ENCODE measurements at regions of chr3 and their contacts with region 1.

Region 1: DNA sequence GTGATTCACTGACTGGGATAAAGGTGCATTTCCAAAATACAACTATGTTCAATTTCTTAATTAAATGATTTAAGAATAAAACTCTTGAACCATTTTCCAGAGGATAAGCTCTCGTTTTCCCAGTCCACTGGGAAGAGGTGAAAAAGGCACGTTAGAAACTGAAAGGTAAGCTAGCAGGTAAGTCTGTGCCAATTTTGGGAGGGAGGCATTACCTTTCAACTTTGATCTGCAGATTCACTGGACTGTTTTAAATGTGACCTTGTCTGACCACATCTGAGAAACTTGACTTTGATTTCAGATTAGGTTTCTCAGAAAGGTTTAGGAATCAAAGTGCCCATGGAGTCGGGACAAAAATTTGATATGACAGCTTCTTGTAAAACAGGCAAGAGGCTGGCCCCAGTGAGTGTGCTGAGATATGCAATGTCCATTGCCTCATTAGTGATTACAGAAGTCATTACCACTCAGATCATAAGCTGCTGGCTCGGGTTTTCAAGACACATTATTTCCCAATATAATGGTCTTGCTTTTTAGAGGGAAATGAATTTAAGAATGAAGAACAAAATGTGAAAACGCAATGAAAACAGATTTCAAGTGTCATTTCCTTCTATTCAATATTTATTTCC is 118.8 kb downstream of the ADAMTS9 start:
- DNase-seq: no peak
- H3K4me3 ChIP-seq: no peak overlapping the region
- H3K27ac ChIP-seq: no peak overlapping the region
- H3K4me1 ChIP-seq: no peaks in the 10 kb centered on the region
- H3K27me3 ChIP-seq: no peaks in the 10 kb centered on the region
- CTCF ChIP-seq: no peak
- POLR2A ChIP-seq: no peak

Region 2: DNA sequence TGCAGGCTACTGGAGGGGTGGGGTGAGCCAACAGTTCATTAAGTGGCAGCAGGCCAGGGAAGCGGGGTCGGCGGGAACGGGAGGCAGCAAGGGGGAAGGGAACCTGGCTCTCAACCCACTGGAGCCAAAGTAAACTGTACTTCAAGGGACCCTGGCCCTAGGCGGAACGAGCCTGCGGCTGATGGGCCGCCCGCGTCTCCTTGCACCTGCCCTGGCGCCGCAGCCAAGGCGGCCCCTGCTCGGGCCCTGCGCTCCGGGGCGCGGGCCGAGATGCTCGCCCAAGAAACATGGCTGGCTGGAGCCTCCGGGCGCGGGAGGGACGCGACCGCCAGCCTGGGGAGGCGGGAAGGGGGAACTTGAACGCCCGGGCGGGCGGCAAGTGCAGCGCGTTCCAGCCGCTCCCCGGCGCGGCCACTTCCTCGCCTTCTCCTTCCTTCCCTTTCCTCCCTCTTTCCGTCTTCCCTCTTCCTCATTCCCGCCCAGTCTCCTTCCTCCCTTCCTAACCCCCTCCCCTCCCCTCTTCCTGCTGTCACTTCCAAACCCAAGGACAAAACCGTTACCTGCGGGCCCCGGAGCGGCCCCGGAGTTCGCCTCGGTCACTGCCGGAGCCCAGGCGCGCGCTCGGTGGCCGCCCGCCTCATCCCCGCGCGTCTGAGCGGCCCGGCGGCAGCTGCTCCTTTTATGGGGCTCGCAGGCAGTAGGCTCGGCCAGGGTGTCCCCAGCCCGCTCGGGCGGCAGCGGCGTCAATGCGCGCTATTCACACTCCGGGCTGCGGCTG is 980.0 kb after region 1 on chr3:
- intact Hi-C with region 1: loop called (anchors 5 kb)
- DNase-seq: no peak
- H3K4me3 ChIP-seq: peak overlapping the region; percentile 39 to 62 (median 53)
- H3K27ac ChIP-seq: no peak overlapping the region
- H3K4me1 ChIP-seq: peaks cover 0 to 3% of the 10 kb centered on the region in 2 donors
- H3K27me3 ChIP-seq: no peaks in the 10 kb centered on the region
- CTCF ChIP-seq: no peak
- POLR2A ChIP-seq: no peak

Measured in breast epithelium (tissue), 4 donors.